ENCODE measurements at regions of chr7 and their contacts with region 1.

Region 1: GRCh38 chr7:140403878-140404564 is at the start of gene RAB19:
- DNase-seq: peak; percentile 7 to 67 (median 56)
- ATAC-seq: peak; percentile 87
- H3K4me3 ChIP-seq: peak within 1 kb of the TSS; percentile 82
- H3K4me3 Mint-ChIP-seq: peak within 1 kb of the TSS; percentile 92 to 99 (median 97)
- H3K27ac ChIP-seq: peak within 1 kb of the TSS; percentile 87
- H3K27ac Mint-ChIP-seq: peak within 1 kb of the TSS; percentile 91 to 99 (median 96)
- H3K4me1 ChIP-seq: peaks cover 8 to 11% of the 10 kb centered on the region in 2 donors
- H3K4me1 Mint-ChIP-seq: peaks cover 13 to 42% (median 29%) of the 10 kb centered on the region in 7 donors
- H3K27me3 ChIP-seq: no peaks in the 10 kb centered on the region
- H3K27me3 Mint-ChIP-seq: peaks cover 0 to 3% (median 0%) of the 10 kb centered on the region in 5 donors
- total RNA-seq, gene RAB19: 1.8 to 13.3 (median 3.3) TPM

Region 2: DNA sequence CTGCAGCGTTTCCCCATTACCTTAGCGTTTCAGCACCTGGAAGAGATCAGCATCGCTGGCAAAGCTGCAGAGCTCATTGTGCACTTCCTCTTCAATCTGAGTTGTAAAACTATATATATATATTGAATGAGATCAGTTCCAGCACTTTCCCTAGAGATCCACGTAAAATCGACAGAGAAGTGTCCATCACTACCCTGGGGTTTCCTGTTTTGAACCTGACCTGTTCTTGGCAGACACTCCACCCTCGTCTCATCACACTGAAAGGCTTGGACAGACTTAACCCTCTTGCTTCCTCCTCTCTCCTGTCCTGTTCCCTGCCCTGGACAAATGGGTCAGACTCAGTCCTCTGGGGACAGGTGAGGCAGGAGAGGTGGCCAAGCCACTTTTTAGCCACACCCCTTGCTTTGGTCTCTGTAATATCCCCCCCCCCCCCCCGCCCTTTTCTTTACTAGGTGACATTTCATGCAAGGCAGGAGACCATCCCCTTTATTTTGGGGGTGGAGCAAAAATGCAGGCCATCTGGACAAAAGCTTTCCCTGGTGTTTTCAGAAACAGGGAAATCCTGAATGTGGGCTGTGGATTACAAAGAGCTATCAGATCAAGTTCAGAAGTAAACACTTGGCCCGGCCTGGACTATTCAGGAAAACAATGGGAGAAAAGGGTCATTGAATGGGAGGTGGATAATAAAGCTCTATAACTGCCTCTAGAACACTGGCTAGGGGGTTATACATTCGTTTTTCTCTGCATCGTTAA is 143.5 kb before region 1 on chr7:
- CTCF ChIA-PET with region 1: no interaction called
- POLR2A ChIA-PET with region 1: no interaction called
- intact Hi-C with region 1: loop called in 1 of 2 experiments (anchors 5 kb)
- DNase-seq: no peak
- ATAC-seq: no peak
- H3K4me3 ChIP-seq: no peak overlapping the region
- H3K4me3 Mint-ChIP-seq: peak overlapping the region in 1 of 10 donors; percentile 7
- H3K27ac ChIP-seq: no peak overlapping the region
- H3K27ac Mint-ChIP-seq: peak overlapping the region in 5 of 9 donors; percentile 41 to 89 (median 74)
- H3K4me1 ChIP-seq: peaks cover 18 to 29% of the 10 kb centered on the region in 2 donors
- H3K4me1 Mint-ChIP-seq: peaks cover 29 to 58% (median 47%) of the 10 kb centered on the region in 7 donors
- H3K27me3 ChIP-seq: no peaks in the 10 kb centered on the region
- H3K27me3 Mint-ChIP-seq: peaks cover 0 to 4% (median 0%) of the 10 kb centered on the region in 5 donors

Region 3: GRCh38 chr7:140316165-140316661 is 87.8 kb before region 1 on chr7:
- CTCF ChIA-PET with region 1: no interaction called
- POLR2A ChIA-PET with region 1: no interaction called
- intact Hi-C with region 1: no loop called
- DNase-seq: peak in 1 of 9 donors; percentile 32
- ATAC-seq: peak; percentile 85
- H3K4me3 ChIP-seq: no peak overlapping the region
- H3K4me3 Mint-ChIP-seq: peak overlapping the region in 1 of 10 donors; percentile 13
- H3K27ac ChIP-seq: no peak overlapping the region
- H3K27ac Mint-ChIP-seq: peak overlapping the region in 2 of 9 donors; percentile 28 to 43
- H3K4me1 ChIP-seq: no peaks in the 10 kb centered on the region
- H3K4me1 Mint-ChIP-seq: peaks cover 0 to 43% (median 4%) of the 10 kb centered on the region in 7 donors
- H3K27me3 ChIP-seq: no peaks in the 10 kb centered on the region
- H3K27me3 Mint-ChIP-seq: peaks cover 0 to 4% (median 0%) of the 10 kb centered on the region in 5 donors

Region 4: DNA sequence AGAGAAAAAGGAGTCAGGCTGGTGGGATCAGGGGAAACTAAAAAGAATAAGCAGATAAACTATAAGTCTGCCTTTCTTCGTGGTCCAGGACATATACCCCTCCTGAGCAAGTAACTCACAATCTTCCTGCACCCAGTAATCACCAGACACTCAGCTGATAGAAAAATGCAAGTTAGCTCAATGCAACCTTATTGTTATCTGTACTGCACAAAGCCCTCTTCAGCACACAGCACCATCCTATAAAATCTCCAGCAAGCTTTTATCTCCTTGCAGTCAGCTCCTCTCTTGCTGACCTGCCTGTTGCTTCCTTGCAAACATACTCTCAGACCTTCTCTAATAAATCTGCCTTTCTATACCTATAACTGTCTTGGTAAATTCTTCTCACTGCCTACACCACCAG is 12.4 kb before region 1 on chr7:
- CTCF ChIA-PET with region 1: no interaction called
- POLR2A ChIA-PET with region 1: no interaction called
- intact Hi-C with region 1: no loop called
- DNase-seq: no peak
- ATAC-seq: no peak
- H3K4me3 ChIP-seq: no peak overlapping the region
- H3K4me3 Mint-ChIP-seq: no peak overlapping the region
- H3K27ac ChIP-seq: no peak overlapping the region
- H3K27ac Mint-ChIP-seq: no peak overlapping the region
- H3K4me1 ChIP-seq: peaks cover 0 to 17% of the 10 kb centered on the region in 2 donors
- H3K4me1 Mint-ChIP-seq: peaks cover 7 to 19% (median 7%) of the 10 kb centered on the region in 7 donors
- H3K27me3 ChIP-seq: no peaks in the 10 kb centered on the region
- H3K27me3 Mint-ChIP-seq: no peaks in the 10 kb centered on the region

Region 5: GRCh38 chr7:140439359-140439758 is 35.3 kb after region 1 on chr7:
- CTCF ChIA-PET with region 1: no interaction called
- POLR2A ChIA-PET with region 1: no interaction called
- intact Hi-C with region 1: loop called (anchors 2 to 5 kb)
- DNase-seq: no peak
- ATAC-seq: no peak
- H3K4me3 ChIP-seq: no peak overlapping the region
- H3K4me3 Mint-ChIP-seq: no peak overlapping the region
- H3K27ac ChIP-seq: no peak overlapping the region
- H3K27ac Mint-ChIP-seq: no peak overlapping the region
- H3K4me1 ChIP-seq: no peaks in the 10 kb centered on the region
- H3K4me1 Mint-ChIP-seq: peaks cover 0 to 11% (median 0%) of the 10 kb centered on the region in 7 donors
- H3K27me3 ChIP-seq: no peaks in the 10 kb centered on the region
- H3K27me3 Mint-ChIP-seq: peaks cover 0 to 7% (median 0%) of the 10 kb centered on the region in 5 donors

Region 6: GRCh38 chr7:140494867-140495266 is 90.8 kb after region 1 on chr7:
- CTCF ChIA-PET with region 1: no interaction called
- POLR2A ChIA-PET with region 1: no interaction called
- intact Hi-C with region 1: loop called in 1 of 2 experiments (anchors 2 kb)
- DNase-seq: no peak
- ATAC-seq: no peak
- H3K4me3 ChIP-seq: no peak overlapping the region
- H3K4me3 Mint-ChIP-seq: no peak overlapping the region
- H3K27ac ChIP-seq: no peak overlapping the region
- H3K27ac Mint-ChIP-seq: no peak overlapping the region
- H3K4me1 ChIP-seq: no peaks in the 10 kb centered on the region
- H3K4me1 Mint-ChIP-seq: peaks cover 0 to 5% (median 0%) of the 10 kb centered on the region in 7 donors
- H3K27me3 ChIP-seq: no peaks in the 10 kb centered on the region
- H3K27me3 Mint-ChIP-seq: peaks cover 0 to 3% (median 0%) of the 10 kb centered on the region in 5 donors